Natural killer cell (primary cell): ENCODE measurements at regions of chr14 and their contacts with region 1.

Region 1: GRCh38 chr14:39266871-39267591 is 33.3 kb downstream of the MIA2 start:
- DNase-seq: peak; percentile 86
- ATAC-seq: peak; percentile 73 to 91 (median 83)
- H3K4me3 ChIP-seq: peak overlapping the region; percentile 87
- H3K4me3 Mint-ChIP-seq: peak overlapping the region; percentile 78
- H3K27ac ChIP-seq: peak overlapping the region; percentile 96
- H3K27ac Mint-ChIP-seq: peak overlapping the region; percentile 74 to 97
- H3K4me1 ChIP-seq: peaks cover 18% of the 10 kb centered on the region
- H3K4me1 Mint-ChIP-seq: peaks cover 56 to 59% of the 10 kb centered on the region in 2 donors
- H3K27me3 ChIP-seq: no peaks in the 10 kb centered on the region
- H3K27me3 Mint-ChIP-seq: no peaks in the 10 kb centered on the region
- CTCF ChIP-seq: no peak

Region 2: GRCh38 chr14:38079268-38079667 is 1187.8 kb before region 1 on chr14:
- intact Hi-C with region 1: loop called (anchors 10 kb)
- DNase-seq: no peak
- ATAC-seq: peak in 1 of 3 donors; percentile 22
- H3K4me3 ChIP-seq: no peak overlapping the region
- H3K4me3 Mint-ChIP-seq: peak overlapping the region; percentile 72
- H3K27ac ChIP-seq: no peak overlapping the region
- H3K27ac Mint-ChIP-seq: peak overlapping the region; percentile 80 to 84
- H3K4me1 ChIP-seq: peaks cover 20% of the 10 kb centered on the region
- H3K4me1 Mint-ChIP-seq: peaks cover 43 to 46% of the 10 kb centered on the region in 2 donors
- H3K27me3 ChIP-seq: no peaks in the 10 kb centered on the region
- H3K27me3 Mint-ChIP-seq: peaks cover 0 to 3% of the 10 kb centered on the region in 2 donors
- CTCF ChIP-seq: no peak

Region 3: DNA sequence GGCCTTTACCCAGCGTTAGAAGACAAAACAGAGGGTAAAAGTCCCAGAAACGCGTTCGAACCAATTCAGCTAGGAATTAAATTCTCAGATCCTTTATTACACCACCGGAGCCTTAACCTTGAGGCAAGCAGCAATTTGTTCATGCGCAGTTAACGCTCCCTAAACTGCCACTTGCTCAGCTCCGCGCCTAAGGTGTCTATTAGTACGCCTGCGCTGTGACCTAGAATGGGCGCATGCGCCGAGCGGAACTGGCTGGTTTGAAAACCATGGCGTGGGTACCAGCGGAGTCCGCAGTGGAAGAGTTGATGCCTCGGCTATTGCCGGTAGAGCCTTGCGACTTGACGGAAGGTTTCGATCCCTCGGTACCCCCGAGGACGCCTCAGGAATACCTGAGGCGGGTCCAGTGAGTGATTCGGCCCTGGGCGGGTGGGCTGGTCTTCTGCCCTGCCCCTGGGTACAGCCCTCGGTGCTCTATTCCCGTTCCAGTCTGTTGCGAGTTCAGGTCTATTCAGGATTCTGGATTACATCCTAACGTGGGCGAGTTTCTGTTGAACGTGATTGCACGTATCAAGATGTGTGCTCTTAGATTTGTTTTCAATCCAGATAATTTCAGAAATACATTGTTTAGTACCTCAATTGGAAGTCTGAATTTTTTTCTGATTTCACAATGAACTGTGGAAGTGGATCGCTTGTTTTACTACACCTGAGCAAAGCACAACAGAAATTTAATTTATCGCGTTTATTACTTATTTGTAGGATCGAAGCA is 152.8 kb before region 1 on chr14 and contains the start of gene GEMIN2:
- intact Hi-C with region 1: loop called (anchors 5 kb)
- DNase-seq: peak; percentile 91 to 98
- ATAC-seq: peak; percentile 98
- H3K4me3 ChIP-seq: peak within 1 kb of the TSS; percentile 85
- H3K4me3 Mint-ChIP-seq: peak within 1 kb of the TSS; percentile 95
- H3K27ac ChIP-seq: peak within 1 kb of the TSS; percentile 83
- H3K27ac Mint-ChIP-seq: peak within 1 kb of the TSS; percentile 91 to 94
- H3K4me1 ChIP-seq: peaks cover 5% of the 10 kb centered on the region
- H3K4me1 Mint-ChIP-seq: peaks cover 12 to 15% of the 10 kb centered on the region in 2 donors
- H3K27me3 ChIP-seq: no peaks in the 10 kb centered on the region
- H3K27me3 Mint-ChIP-seq: peaks cover 4 to 7% of the 10 kb centered on the region in 2 donors
- CTCF ChIP-seq: no peak
- total RNA-seq, gene GEMIN2: 8.4 to 12.8 (median 10.0) TPM

Region 4: DNA sequence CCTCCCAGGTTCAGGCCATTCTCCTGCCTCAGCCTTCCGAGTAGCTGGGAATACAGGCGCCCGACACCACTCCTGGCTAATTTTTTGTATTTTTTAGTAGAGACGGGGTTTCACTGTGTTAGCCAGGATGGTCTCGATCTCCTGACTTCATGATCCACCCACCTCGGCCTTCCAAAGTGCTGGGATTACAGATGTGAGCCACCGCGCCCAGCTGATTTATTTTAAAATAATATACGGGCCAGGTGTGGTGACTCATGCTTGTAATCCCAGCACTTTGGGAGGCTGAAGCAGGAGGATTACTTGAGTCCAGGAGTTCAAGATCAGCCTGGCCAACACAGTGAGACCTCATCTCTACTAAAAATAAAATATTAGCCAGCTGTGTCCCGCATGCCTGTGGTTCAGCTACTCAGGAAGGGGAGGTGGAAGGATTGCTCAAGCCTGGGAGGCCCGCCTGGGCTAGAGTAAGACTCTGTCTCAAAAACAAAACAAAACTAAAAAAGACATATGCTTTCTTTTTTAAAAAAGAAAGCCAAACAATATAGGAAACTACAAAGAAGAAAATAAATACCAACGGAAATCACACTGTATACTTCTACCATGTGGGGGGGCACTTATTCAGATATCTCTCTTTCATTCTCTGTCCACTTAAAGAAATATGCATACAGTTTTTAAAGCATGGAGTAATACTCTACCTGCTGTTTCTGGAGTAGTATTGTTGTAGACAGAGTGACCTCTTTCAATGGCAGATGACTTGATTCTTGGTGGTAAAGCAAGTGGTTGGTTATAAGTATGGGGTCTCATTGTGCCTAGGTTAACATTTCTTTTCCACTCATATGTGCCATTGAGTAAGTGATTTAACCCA is 34.2 kb before region 1 on chr14:
- intact Hi-C with region 1: loop called (anchors 1 kb)
- DNase-seq: peak in 1 of 2 donors; percentile 43
- ATAC-seq: peak; percentile 48 to 74 (median 63)
- H3K4me3 ChIP-seq: no peak overlapping the region
- H3K4me3 Mint-ChIP-seq: peak overlapping the region; percentile 79
- H3K27ac ChIP-seq: peak overlapping the region; percentile 82
- H3K27ac Mint-ChIP-seq: peak overlapping the region; percentile 83 to 92
- H3K4me1 ChIP-seq: peaks cover 27% of the 10 kb centered on the region
- H3K4me1 Mint-ChIP-seq: peaks cover 44 to 53% of the 10 kb centered on the region in 2 donors
- H3K27me3 ChIP-seq: no peaks in the 10 kb centered on the region
- H3K27me3 Mint-ChIP-seq: no peaks in the 10 kb centered on the region
- CTCF ChIP-seq: no peak

Region 5: DNA sequence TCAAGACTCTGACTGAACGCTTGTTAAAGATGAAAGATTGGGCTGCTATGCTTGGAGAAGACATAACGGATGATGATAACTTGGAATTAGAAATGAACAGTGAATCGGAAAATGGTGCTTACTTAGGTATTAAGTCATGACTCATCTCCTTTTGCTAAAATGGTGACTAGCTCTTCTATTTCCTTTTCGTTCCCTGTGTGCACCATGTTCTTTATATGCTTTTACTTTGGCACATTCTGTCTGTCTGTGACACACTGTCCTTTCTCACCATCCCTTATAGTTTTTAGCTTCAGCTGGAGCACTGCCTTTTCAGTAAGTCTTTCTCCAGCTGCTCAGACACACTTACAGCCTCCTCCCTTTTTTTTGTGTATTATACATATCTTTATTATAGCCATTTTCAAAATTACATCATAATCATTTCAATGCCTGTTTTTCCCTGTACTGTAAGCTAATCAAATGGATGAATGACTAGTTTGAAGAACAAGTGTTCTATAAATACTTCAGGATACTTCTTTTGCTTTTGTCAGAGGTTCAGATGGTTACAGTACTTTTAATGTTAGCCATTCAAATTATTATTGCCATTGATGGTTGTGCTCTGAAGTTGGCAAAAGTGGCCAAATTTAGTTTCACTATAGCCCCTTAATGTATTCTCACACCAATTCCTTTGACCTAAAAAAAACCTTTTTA is 35.2 kb after region 1 on chr14:
- intact Hi-C with region 1: no loop called
- DNase-seq: no peak
- ATAC-seq: no peak
- H3K4me3 ChIP-seq: no peak overlapping the region
- H3K4me3 Mint-ChIP-seq: no peak overlapping the region
- H3K27ac ChIP-seq: no peak overlapping the region
- H3K27ac Mint-ChIP-seq: peak overlapping the region; percentile 16 to 56
- H3K4me1 ChIP-seq: no peaks in the 10 kb centered on the region
- H3K4me1 Mint-ChIP-seq: peaks cover 0 to 18% of the 10 kb centered on the region in 2 donors
- H3K27me3 ChIP-seq: no peaks in the 10 kb centered on the region
- H3K27me3 Mint-ChIP-seq: no peaks in the 10 kb centered on the region
- CTCF ChIP-seq: no peak

Region 6: GRCh38 chr14:39432179-39432618 is 165.2 kb after region 1 on chr14 and contains the start of gene FBXO33:
- intact Hi-C with region 1: loop called (anchors 1 kb)
- DNase-seq: peak; percentile 96 to 98
- ATAC-seq: peak; percentile 84 to 93 (median 86)
- H3K4me3 ChIP-seq: peak within 1 kb of the TSS; percentile 98
- H3K4me3 Mint-ChIP-seq: peak within 1 kb of the TSS; percentile 100
- H3K27ac ChIP-seq: peak within 1 kb of the TSS; percentile 100
- H3K27ac Mint-ChIP-seq: peak within 1 kb of the TSS; percentile 100
- H3K4me1 ChIP-seq: peaks cover 22% of the 10 kb centered on the region
- H3K4me1 Mint-ChIP-seq: peaks cover 43 to 52% of the 10 kb centered on the region in 2 donors
- H3K27me3 ChIP-seq: no peaks in the 10 kb centered on the region
- H3K27me3 Mint-ChIP-seq: no peaks in the 10 kb centered on the region
- CTCF ChIP-seq: no peak
- total RNA-seq, gene FBXO33: 45.7 to 54.1 (median 50.2) TPM